WTC11 (cell line): ENCODE measurements at regions of chr1 and their contacts with region 1.

Region 1: GRCh38 chr1:161165742-161166668 is at the start of gene PPOX:
- DNase-seq: peak; percentile 94
- ATAC-seq: peak; percentile 95
- H3K4me3 Mint-ChIP-seq: peak within 1 kb of the TSS; percentile 79
- H3K27ac Mint-ChIP-seq: peak within 1 kb of the TSS; percentile 13
- H3K4me1 Mint-ChIP-seq: peaks cover 8% of the 10 kb centered on the region
- H3K27me3 Mint-ChIP-seq: no peaks in the 10 kb centered on the region
- CTCF ChIP-seq: peak; percentile 28; the same call in 1 of the 2 replicates
- total RNA-seq, gene PPOX: 39.8 to 44.8 TPM (median 43.4 TPM) in 3 replicates

Region 2: GRCh38 chr1:161132410-161133219 is 33.4 kb before region 1 on chr1 and contains the start of gene DEDD:
- CTCF ChIA-PET with region 1: interaction called, 13 read pairs
- POLR2A ChIA-PET with region 1: interaction called, 8 read pairs
- DNase-seq: peak; percentile 90
- ATAC-seq: peak; percentile 83
- H3K4me3 Mint-ChIP-seq: no peak within 1 kb of the TSS
- H3K27ac Mint-ChIP-seq: peak within 1 kb of the TSS; percentile 88
- H3K4me1 Mint-ChIP-seq: peaks cover 27% of the 10 kb centered on the region
- H3K27me3 Mint-ChIP-seq: no peaks in the 10 kb centered on the region
- CTCF ChIP-seq: no peak
- total RNA-seq, gene DEDD: 39.2 to 43.3 TPM (median 40.0 TPM) in 3 replicates

Region 3: DNA sequence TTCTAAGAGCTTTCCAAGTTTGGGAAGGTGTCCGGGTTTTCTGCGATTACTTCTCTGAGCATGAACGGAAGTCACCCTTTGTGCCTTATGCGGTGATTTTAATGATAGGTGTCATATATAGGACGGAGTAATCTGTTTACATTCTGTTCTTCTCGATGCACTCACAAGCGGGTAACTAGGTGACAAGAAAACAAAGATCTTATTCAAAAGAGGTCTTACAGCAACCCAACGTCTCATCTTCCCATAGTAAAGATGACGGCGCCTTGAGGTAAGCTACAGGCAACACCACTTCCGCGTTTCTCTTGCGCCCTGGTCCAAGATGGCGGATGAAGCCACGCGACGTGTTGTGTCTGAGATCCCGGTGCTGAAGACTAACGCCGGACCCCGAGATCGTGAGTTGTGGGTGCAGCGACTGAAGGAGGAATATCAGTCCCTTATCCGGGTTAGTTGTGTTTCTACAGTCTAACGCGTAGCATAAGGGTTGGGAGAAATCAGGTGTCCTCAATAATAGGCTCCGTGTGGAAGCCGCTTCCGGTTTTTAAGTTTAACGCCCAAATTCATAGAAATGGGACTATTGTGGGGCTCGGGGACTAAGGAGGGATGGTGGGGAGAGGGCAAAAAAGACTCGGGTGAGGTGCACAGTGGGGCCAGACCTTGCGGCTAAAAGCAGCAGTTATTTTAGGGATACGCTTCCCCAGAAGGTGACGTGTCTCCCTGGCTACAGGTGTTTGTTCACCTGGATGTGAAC is 12.2 kb before region 1 on chr1 and contains the start of gene UFC1:
- CTCF ChIA-PET with region 1: interaction called, 18 read pairs
- POLR2A ChIA-PET with region 1: interaction called, 13 read pairs
- DNase-seq: peak; percentile 71
- ATAC-seq: peak; percentile 92
- H3K4me3 Mint-ChIP-seq: peak within 1 kb of the TSS; percentile 99
- H3K27ac Mint-ChIP-seq: peak within 1 kb of the TSS; percentile 100
- H3K4me1 Mint-ChIP-seq: peaks cover 17% of the 10 kb centered on the region
- H3K27me3 Mint-ChIP-seq: no peaks in the 10 kb centered on the region
- CTCF ChIP-seq: no peak
- total RNA-seq, gene UFC1: 56.2 to 61.2 TPM (median 60.7 TPM) in 3 replicates

Region 4: GRCh38 chr1:161177112-161177935 is 11.3 kb after region 1 on chr1 and contains the start of gene B4GALT3:
- CTCF ChIA-PET with region 1: interaction called, 41 read pairs
- POLR2A ChIA-PET with region 1: interaction called, 8 read pairs
- DNase-seq: peak; percentile 97
- ATAC-seq: peak; percentile 88
- H3K4me3 Mint-ChIP-seq: peak within 1 kb of the TSS; percentile 97
- H3K27ac Mint-ChIP-seq: peak within 1 kb of the TSS; percentile 100
- H3K4me1 Mint-ChIP-seq: peaks cover 20% of the 10 kb centered on the region
- H3K27me3 Mint-ChIP-seq: no peaks in the 10 kb centered on the region
- CTCF ChIP-seq: no peak
- total RNA-seq, gene B4GALT3: 40.1 to 44.8 TPM (median 40.7 TPM) in 3 replicates

Region 5: GRCh38 chr1:161201828-161202725 is 36.1 kb after region 1 on chr1 and contains the start of gene NDUFS2:
- CTCF ChIA-PET with region 1: interaction called, 20 read pairs
- POLR2A ChIA-PET with region 1: interaction called, 4 read pairs
- DNase-seq: peak; percentile 97
- ATAC-seq: peak; percentile 80
- H3K4me3 Mint-ChIP-seq: peak within 1 kb of the TSS; percentile 91
- H3K27ac Mint-ChIP-seq: peak within 1 kb of the TSS; percentile 96
- H3K4me1 Mint-ChIP-seq: peaks cover 59% of the 10 kb centered on the region
- H3K27me3 Mint-ChIP-seq: no peaks in the 10 kb centered on the region
- CTCF ChIP-seq: no peak
- total RNA-seq, gene NDUFS2: 105 to 108 TPM (median 105 TPM) in 3 replicates